ENCODE measurements at regions of chr22 and their contacts with region 1.

Region 1: DNA sequence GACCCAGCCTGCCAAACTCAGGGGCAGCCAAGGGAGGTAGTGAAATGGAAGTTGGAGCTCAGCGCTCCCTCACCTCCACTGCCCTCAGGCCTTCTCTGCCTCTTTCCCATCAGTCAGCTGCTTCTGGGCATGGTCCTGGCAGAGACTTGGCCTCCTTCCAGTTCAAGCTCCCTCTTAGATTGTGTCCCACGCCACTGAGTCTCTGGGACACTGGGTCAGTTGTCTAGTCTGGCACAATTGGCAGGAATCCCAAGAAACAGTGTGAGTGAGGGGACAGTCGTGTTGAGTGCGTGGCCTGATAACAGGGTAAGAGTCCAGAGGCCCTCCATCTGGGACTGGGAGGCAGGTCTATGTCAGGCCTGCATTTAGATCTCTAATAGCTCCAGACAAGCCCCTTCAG is 7.1 kb upstream of the SLC35E4 start:
- DNase-seq: no peak
- H3K4me3 ChIP-seq: no peak overlapping the region
- H3K27ac ChIP-seq: no peak overlapping the region
- H3K4me1 ChIP-seq: no peaks in the 10 kb centered on the region
- H3K27me3 ChIP-seq: no peaks in the 10 kb centered on the region
- CTCF ChIP-seq: no peak

Region 2: DNA sequence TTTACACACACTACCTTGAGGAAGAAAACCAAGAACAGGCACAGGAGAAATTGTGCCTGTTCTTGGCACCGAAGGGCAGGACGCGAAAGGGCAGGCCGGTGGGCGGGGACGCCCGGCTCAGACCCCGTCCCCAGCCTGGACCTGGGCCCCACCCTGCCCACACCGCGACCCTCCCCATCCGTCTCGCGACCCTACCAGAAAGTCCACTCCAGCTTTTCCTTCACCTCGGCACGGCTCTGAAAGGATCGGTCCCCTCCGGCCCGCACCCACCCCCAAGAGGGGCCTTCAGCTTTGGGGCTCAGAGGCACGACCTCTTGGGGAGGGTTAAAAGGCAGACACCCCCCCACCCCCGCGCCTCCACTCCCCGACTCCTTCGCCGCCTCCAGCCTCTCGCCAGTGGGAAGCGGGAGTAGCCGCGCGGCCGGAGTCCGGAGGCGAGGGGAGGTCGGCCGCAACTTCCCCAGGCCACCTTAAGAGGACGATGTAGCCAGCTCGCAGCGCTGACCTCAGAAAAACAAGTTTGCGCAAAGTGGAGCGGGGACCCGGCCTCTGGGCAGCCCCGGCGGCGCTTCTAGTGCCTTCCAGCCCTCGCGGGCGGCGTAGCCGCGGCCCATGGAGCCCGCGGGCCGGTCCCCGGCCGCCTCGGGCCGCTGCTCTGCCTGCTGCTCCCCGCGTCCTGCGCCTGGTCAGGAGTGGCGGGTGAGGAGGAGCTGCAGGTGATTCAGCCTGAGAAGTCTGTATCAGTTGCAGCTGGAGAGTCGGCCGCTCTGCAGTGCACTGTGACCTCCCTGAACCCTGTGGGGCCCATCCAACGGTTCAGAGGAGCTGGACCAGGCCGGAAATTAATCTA is 86.3 kb before region 1 on chr22:
- CTCF ChIA-PET with region 1: no interaction called
- POLR2A ChIA-PET with region 1: no interaction called
- intact Hi-C with region 1: no loop called
- DNase-seq: no peak
- H3K4me3 ChIP-seq: no peak overlapping the region
- H3K27ac ChIP-seq: no peak overlapping the region
- H3K4me1 ChIP-seq: 0 out of 2 replicates have a peak, but pooled peaks cover 9% of the 10 kb centered on the region
- H3K27me3 ChIP-seq: no peaks in the 10 kb centered on the region
- CTCF ChIP-seq: no peak

Region 3: DNA sequence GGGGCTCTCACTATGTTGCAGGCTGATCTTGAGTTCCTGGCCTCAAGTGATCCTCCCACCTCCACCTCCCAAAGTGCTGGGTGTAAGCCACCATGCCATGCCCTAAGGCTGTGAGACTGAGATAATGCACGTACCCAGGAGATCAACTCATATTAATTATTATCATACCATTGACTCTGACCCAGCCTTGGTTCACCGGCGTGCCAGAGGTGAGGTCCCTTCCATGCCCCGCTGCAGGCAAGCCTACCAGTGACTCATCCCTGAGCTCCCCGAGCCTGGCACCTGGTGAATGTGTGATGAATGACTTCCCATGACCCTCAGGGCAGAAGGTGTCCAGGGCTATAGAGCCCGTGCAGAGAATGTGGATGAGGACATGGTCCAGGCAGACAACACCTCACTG is 66.1 kb before region 1 on chr22:
- CTCF ChIA-PET with region 1: interaction called, 14 read pairs
- POLR2A ChIA-PET with region 1: no interaction called
- intact Hi-C with region 1: no loop called
- DNase-seq: peak; percentile 89 to 97
- H3K4me3 ChIP-seq: no peak overlapping the region
- H3K27ac ChIP-seq: peak overlapping the region; percentile 7; the same call in 1 of the 2 replicates
- H3K4me1 ChIP-seq: peaks cover 20% of the 10 kb centered on the region
- H3K27me3 ChIP-seq: no peaks in the 10 kb centered on the region
- CTCF ChIP-seq: no peak

Measured in PC-9 (cell line).